Endothelial cell of umbilical vein (primary cell): ENCODE measurements at regions of chr9 and their contacts with region 1.

Region 1: GRCh38 chr9:14693206-14693861 is at the start of gene ZDHHC21:
- DNase-seq: peak; percentile 51
- H3K4me3 ChIP-seq: peak within 1 kb of the TSS; percentile 77 to 97 (median 89)
- H3K27ac ChIP-seq: peak within 1 kb of the TSS; percentile 63
- H3K4me1 ChIP-seq: peaks cover 23% of the 10 kb centered on the region
- H3K27me3 ChIP-seq: no peaks in the 10 kb centered on the region
- CTCF ChIP-seq: no peak
- POLR2A ChIP-seq: peak; percentile 78
- total RNA-seq, gene ZDHHC21: 21.0 and 25.9 TPM in 2 replicates

Region 2: DNA sequence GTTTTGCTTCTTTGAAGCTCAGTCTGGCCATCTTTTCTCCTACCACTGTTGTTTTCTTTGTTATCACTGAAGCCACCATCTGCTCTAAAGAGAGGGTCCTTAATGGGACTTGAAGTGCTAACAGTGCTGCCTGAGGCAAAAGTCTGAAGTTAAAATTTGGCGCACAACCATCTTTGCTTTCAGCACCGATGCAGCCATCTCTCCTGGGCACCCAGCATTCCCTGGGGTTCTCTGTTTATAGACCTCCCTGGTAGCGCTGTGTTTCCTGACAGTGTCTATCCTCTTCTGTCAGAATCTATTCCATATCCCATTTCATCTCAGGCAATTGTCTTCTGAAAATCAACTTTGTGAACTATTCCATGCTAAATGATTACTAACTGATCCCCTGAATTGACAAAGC is 922.4 kb before region 1 on chr9:
- CTCF ChIA-PET with region 1: no interaction called
- POLR2A ChIA-PET with region 1: no interaction called
- dilution Hi-C with region 1: no loop called
- intact Hi-C with region 1: no loop called
- DNase-seq: no peak
- H3K4me3 ChIP-seq: no peak overlapping the region
- H3K27ac ChIP-seq: no peak overlapping the region
- H3K4me1 ChIP-seq: no peaks in the 10 kb centered on the region
- H3K27me3 ChIP-seq: no peaks in the 10 kb centered on the region
- CTCF ChIP-seq: no peak
- POLR2A ChIP-seq: no peak

Region 3: DNA sequence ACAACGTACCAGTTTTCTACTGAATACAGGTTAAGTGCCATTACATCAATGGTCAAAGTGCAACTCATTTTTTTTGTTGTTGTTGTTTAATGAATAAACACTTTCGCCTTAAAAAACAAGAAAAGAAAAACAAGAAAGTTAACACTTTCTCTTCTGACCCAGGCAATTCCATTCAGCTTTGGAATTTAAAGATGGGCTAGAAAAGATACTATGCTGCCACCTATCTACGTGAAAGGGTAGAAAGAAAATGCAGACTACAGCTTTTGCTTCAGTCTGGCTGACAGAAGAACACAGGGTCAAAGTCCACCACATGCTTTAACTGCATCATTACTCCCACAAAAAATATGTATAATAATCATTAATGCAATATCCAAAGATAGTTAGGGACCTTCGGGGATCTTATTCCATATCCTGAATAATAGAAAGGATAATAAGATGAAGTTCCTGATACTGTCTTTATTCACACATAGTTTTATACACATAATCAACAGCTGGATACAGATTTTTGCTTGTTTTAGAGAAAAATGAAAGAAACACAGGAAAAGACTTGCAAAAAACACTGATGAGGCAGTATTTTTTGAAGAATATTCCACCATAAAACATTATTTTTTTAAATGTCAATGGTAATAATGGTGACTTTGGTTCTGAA is 40.5 kb before region 1 on chr9:
- CTCF ChIA-PET with region 1: no interaction called
- POLR2A ChIA-PET with region 1: no interaction called
- dilution Hi-C with region 1: no loop called
- intact Hi-C with region 1: loop called (anchors 5 kb)
- DNase-seq: peak; percentile 54
- H3K4me3 ChIP-seq: no peak overlapping the region
- H3K27ac ChIP-seq: no peak overlapping the region
- H3K4me1 ChIP-seq: no peaks in the 10 kb centered on the region
- H3K27me3 ChIP-seq: no peaks in the 10 kb centered on the region
- CTCF ChIP-seq: peak; percentile 29 to 30
- POLR2A ChIP-seq: no peak

Region 4: DNA sequence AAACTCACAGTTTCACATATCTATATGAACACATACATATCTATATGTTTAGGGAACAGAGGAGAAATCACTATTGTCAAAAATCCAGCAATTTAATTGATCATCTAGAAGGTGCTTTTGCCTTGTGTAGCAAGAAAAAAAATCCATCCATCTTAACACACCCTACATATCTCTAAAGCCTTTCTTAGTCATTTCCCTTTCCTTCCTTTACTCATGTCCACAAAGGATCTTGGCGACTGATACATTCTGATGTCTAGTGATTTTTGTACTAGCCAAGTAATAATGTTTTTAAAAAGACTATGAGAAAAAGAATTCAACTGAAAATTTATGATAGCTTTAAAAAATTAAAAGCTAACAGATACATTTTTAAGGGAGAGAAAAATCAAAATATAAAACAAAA is 22.6 kb before region 1 on chr9:
- CTCF ChIA-PET with region 1: interaction called, 6 read pairs
- POLR2A ChIA-PET with region 1: no interaction called
- dilution Hi-C with region 1: no loop called
- intact Hi-C with region 1: loop called (anchors 1 kb)
- DNase-seq: peak; percentile 82
- H3K4me3 ChIP-seq: peak overlapping the region in 1 of 3 experiments; percentile 40
- H3K27ac ChIP-seq: peak overlapping the region; percentile 93
- H3K4me1 ChIP-seq: peaks cover 27% of the 10 kb centered on the region
- H3K27me3 ChIP-seq: no peaks in the 10 kb centered on the region
- CTCF ChIP-seq: no peak
- POLR2A ChIP-seq: no peak

Region 5: GRCh38 chr9:14752271-14752670 is 58.9 kb after region 1 on chr9:
- CTCF ChIA-PET with region 1: no interaction called
- POLR2A ChIA-PET with region 1: no interaction called
- dilution Hi-C with region 1: no loop called
- intact Hi-C with region 1: loop called (anchors 2 kb)
- DNase-seq: peak; percentile 97
- H3K4me3 ChIP-seq: no peak overlapping the region
- H3K27ac ChIP-seq: peak overlapping the region; percentile 59
- H3K4me1 ChIP-seq: peaks cover 39% of the 10 kb centered on the region
- H3K27me3 ChIP-seq: no peaks in the 10 kb centered on the region
- CTCF ChIP-seq: no peak
- POLR2A ChIP-seq: peak; percentile 42